ENCODE measurements at regions of chr10 and their contacts with region 1.

Region 1: GRCh38 chr10:89217057-89217990 is 10.2 kb upstream of the CH25H start:
- DNase-seq: peak; percentile 32 to 57
- ATAC-seq: peak in 3 of 4 donors; percentile 57 to 80 (median 64)
- H3K4me3 ChIP-seq: peak overlapping the region; percentile 4
- H3K27ac ChIP-seq: no peak overlapping the region
- H3K4me1 ChIP-seq: peaks cover 6% of the 10 kb centered on the region
- H3K27me3 ChIP-seq: no peaks in the 10 kb centered on the region
- CTCF ChIP-seq: peak; percentile 92

Region 2: DNA sequence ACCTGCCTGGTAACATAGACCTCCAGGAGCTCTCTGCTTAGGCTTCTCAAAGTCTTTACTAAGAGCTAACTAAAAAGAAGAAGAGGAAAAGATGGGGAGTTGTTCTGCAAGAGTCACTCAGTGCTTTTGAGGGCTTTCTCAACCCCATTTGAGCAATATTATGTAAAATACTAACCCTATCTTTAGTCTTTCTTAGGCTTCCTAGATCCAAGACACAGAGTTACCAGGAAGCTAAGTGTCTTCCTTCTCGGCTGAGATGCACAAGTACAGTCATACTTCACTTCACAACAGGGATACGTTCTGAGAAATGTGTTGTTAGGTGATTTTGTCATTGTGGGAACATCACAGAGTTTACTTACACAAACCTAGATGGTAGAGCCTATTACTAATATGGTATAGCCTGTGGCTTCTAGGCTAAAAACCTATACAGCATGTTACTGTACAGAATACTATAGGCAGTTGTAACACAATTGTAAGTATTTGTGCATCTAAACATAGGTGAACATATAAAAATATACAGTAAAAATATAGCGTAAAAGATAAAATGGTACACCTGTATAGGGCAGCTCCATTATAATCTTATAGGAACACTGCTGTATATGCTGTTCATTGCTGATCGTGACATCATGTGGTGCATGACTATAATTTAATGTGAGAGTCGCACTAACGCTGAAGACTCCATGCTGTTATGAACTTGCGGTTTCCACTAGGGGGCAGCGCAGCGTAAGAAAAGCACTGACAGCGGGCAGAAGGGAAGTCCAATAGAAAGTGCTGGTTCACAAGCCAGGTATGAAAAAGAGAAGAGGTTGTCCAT is 382.0 kb before region 1 on chr10:
- intact Hi-C with region 1: loop called in 1 of 2 experiments (anchors 5 kb)
- DNase-seq: peak; percentile 85 to 90
- ATAC-seq: peak; percentile 78 to 97 (median 90)
- H3K4me3 ChIP-seq: no peak overlapping the region
- H3K27ac ChIP-seq: no peak overlapping the region
- H3K4me1 ChIP-seq: no peaks in the 10 kb centered on the region
- H3K27me3 ChIP-seq: peaks cover 0 to 5% (median 0%) of the 10 kb centered on the region in 3 donors
- CTCF ChIP-seq: peak; percentile 87

Region 3: DNA sequence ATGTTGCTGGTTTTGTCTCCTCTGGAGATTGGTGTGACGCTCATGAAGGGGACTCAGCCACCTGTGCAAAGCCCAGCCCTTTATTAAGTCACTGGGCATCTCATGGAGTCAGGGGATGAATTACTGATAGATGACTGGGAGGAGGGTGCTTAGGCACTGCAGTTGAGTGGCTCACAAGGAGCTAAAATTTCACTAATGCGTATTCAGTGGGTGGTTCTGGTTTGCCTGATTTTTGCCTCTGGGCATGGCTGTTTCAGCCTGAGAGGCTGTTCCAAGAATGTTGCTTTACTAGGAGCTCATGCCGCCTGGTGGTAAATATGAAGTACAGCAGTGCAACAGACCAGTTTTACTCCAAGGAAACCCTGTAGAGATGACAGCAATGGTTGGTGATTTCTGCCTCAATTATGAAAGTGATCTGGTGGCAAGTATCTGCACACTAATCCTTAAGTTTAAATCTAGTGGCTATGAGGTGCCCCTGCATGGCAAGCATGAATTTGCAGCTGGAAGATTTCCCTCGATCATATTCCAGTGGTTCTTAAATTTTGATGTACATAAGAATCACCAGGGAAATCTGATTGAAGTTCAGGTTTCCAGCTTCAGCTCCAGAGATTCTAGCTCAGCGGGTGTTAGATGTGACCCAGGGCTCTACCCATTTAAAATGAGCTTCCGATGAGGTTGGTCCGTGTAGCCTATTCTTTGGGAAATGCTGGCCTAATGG is 284.6 kb before region 1 on chr10:
- intact Hi-C with region 1: loop called (anchors 2 to 10 kb)
- DNase-seq: peak; percentile 24 to 54
- ATAC-seq: peak; percentile 68 to 83 (median 78)
- H3K4me3 ChIP-seq: no peak overlapping the region
- H3K27ac ChIP-seq: no peak overlapping the region
- H3K4me1 ChIP-seq: peaks cover 3% of the 10 kb centered on the region
- H3K27me3 ChIP-seq: no peaks in the 10 kb centered on the region
- CTCF ChIP-seq: peak; percentile 79

Region 4: DNA sequence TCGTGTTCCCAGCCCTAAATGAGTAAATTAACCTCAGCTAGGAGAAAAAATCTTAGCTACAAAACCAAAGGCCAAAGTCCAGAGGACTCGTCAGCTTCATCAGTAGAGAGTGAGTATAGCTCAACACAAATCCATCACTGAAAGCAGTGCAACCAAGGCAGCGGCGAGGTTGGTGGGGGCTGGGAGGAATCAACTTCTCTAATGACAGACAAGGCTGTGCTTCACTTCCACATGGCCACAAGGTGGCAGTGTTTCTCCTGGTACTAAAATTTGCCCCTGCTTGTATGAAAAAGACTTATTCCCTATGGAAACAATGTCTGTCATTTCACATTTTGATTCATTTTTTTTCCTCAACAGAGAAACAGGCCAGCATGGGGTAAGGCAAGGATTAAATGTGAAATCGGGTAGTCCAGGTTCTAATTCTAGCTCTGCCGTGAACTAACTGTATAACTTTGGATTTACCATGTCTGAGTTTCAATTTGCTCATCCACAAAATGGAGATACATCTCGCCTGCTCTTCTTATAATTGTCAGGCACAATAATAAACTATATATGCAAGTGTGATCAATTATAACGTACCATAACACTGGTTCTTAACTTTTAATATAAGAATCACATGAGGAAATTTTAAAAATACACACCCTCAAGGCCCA is 187.4 kb before region 1 on chr10:
- intact Hi-C with region 1: loop called in 1 of 2 experiments (anchors 5 kb)
- DNase-seq: peak; percentile 64 to 71
- ATAC-seq: peak; percentile 60 to 78 (median 71)
- H3K4me3 ChIP-seq: no peak overlapping the region
- H3K27ac ChIP-seq: no peak overlapping the region
- H3K4me1 ChIP-seq: peaks cover 8% of the 10 kb centered on the region
- H3K27me3 ChIP-seq: no peaks in the 10 kb centered on the region
- CTCF ChIP-seq: peak; percentile 93

Region 5: GRCh38 chr10:89563861-89564478 is 346.6 kb after region 1 on chr10:
- intact Hi-C with region 1: loop called in 1 of 2 experiments (anchors 5 kb)
- DNase-seq: no peak
- ATAC-seq: peak; percentile 62 to 90 (median 74)
- H3K4me3 ChIP-seq: no peak overlapping the region
- H3K27ac ChIP-seq: no peak overlapping the region
- H3K4me1 ChIP-seq: no peaks in the 10 kb centered on the region
- H3K27me3 ChIP-seq: no peaks in the 10 kb centered on the region
- CTCF ChIP-seq: peak; percentile 86

Measured in psoas muscle (tissue), 8 donors.